Natural killer cell (primary cell): ENCODE measurements at regions of chr9 and their contacts with region 1.

Region 1: DNA sequence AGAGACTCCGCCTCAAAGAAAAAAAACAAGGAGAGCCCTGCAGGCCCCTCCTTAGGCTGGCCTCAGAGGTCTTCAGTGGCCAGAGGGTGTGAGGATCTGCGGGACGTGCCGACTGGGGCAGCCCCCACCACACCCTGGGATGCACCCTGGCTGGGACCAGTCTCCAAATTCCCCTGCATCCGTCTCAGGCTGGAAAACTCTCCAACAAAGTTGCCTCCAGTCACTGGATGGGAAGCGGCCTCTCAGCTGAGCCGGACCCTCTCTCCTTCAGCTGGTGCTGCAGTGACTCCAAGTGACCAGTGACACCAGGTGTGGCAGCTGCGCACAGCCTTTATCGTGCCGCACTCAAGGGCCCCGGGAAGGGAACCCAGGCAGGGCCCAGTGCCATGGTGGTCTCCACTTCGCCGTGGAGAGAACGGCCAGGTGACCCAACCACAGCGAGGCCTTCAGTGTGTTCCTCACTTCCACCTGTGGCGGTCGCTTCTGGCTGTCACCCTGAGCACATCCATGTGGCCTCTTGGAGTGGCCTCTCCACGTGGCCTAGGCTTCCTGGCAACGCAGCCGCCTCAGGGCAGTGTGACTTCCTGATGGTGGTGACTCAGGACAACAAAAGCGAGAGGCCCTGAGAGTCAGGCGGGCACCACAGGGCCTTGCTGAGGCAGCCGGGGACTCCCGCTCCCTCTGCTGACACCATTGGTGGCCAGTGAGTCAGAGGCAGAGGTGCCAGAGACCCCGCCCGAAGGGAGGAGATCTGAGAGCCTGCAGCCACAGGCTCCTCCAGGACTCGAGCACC is 19.3 kb upstream of the CAMSAP1 start:
- DNase-seq: peak; percentile 46 to 61
- ATAC-seq: peak; percentile 89 to 98 (median 94)
- H3K4me3 ChIP-seq: no peak overlapping the region
- H3K4me3 Mint-ChIP-seq: no peak overlapping the region
- H3K27ac ChIP-seq: peak overlapping the region; percentile 46
- H3K27ac Mint-ChIP-seq: no peak overlapping the region
- H3K4me1 ChIP-seq: peaks cover 20% of the 10 kb centered on the region
- H3K4me1 Mint-ChIP-seq: peaks cover 4 to 9% of the 10 kb centered on the region in 2 donors
- H3K27me3 ChIP-seq: no peaks in the 10 kb centered on the region
- H3K27me3 Mint-ChIP-seq: no peaks in the 10 kb centered on the region
- CTCF ChIP-seq: no peak

Region 2: DNA sequence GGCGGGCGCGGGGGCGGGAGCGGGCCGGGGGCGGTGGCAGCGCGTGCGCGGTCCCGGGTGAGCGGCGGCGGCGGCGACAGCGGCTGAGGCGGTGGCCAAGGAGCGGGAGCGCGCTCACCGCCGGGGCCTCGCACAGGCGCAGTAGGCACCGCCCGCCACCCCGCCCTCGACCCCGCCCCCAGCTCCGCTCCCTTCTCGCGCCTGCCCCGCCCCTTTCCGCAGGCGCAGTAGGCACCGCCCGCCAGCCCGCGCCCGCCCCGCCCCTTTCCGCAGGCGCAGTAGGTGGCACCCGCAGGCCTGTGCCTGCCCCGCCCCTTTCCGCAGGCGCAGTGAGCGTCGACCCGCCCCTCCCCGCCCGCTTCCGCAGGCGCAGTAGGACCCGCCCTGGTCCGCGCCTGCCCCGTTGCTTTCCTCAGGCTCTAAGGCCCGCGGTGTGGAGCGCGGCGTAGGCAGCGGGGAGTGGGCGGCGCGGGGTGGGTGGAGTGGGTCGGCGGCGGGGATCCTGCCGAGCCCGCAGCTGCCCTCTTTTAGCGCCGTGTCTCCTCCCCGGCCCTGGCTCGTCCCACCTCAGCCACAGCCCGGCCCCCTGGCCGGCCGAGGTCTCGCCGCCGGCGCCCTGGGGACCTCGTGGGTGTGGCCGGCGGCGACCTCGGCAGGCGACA is 19.0 kb before region 1 on chr9 and contains the start of gene CAMSAP1:
- intact Hi-C with region 1: loop called (anchors 2 kb)
- DNase-seq: peak; percentile 94 to 97
- ATAC-seq: peak; percentile 88 to 93 (median 88)
- H3K4me3 ChIP-seq: peak within 1 kb of the TSS; percentile 61
- H3K4me3 Mint-ChIP-seq: peak within 1 kb of the TSS; percentile 86
- H3K27ac ChIP-seq: peak within 1 kb of the TSS; percentile 38
- H3K27ac Mint-ChIP-seq: peak within 1 kb of the TSS; percentile 69 to 71
- H3K4me1 ChIP-seq: peaks cover 28% of the 10 kb centered on the region
- H3K4me1 Mint-ChIP-seq: peaks cover 42 to 43% of the 10 kb centered on the region in 2 donors
- H3K27me3 ChIP-seq: no peaks in the 10 kb centered on the region
- H3K27me3 Mint-ChIP-seq: no peaks in the 10 kb centered on the region
- CTCF ChIP-seq: no peak
- total RNA-seq, gene CAMSAP1: 25.9 to 33.5 (median 28.1) TPM

Region 3: DNA sequence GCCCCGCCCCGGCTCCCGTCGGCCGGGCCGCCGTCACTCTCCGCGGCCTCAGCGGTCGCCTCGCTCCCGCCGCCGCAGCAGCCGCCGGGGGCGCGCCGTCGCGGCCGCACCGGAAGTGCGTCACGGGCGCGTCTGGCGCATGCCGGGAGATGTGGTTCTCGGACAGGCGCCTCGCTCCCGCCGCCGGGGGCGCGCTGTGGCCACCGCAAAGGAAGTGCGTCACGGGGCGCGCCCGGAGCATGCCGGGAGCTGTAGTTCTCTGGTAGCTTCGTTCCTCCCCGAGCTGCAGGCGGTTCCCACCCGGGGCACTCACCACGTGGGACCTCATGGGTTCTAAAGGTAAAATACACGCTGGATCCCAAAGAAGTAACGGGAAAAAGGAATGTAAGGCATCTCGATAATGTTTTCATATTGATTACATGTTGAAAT is 34.7 kb after region 1 on chr9 and contains the start of gene UBAC1:
- intact Hi-C with region 1: no loop called
- DNase-seq: peak; percentile 94 to 98
- ATAC-seq: peak; percentile 92 to 96 (median 92)
- H3K4me3 ChIP-seq: peak within 1 kb of the TSS; percentile 80
- H3K4me3 Mint-ChIP-seq: peak within 1 kb of the TSS; percentile 91
- H3K27ac ChIP-seq: peak within 1 kb of the TSS; percentile 53
- H3K27ac Mint-ChIP-seq: peak within 1 kb of the TSS; percentile 68 to 75
- H3K4me1 ChIP-seq: peaks cover 20% of the 10 kb centered on the region
- H3K4me1 Mint-ChIP-seq: peaks cover 21 to 41% of the 10 kb centered on the region in 2 donors
- H3K27me3 ChIP-seq: no peaks in the 10 kb centered on the region
- H3K27me3 Mint-ChIP-seq: peaks cover 0 to 9% of the 10 kb centered on the region in 2 donors
- CTCF ChIP-seq: no peak
- total RNA-seq, gene UBAC1: 22.7 to 31.8 (median 27.6) TPM